Natural killer cell (primary cell): ENCODE measurements at regions of chr3 and their contacts with region 1.

Region 1: GRCh38 chr3:100254168-100254777 is 6.5 kb upstream of the TBC1D23 start:
- DNase-seq: peak in 1 of 2 donors; percentile 65
- ATAC-seq: peak; percentile 54 to 79 (median 70)
- H3K4me3 ChIP-seq: no peak overlapping the region
- H3K4me3 Mint-ChIP-seq: no peak overlapping the region
- H3K27ac ChIP-seq: no peak overlapping the region
- H3K27ac Mint-ChIP-seq: no peak overlapping the region
- H3K4me1 ChIP-seq: no peaks in the 10 kb centered on the region
- H3K4me1 Mint-ChIP-seq: no peaks in the 10 kb centered on the region
- H3K27me3 ChIP-seq: no peaks in the 10 kb centered on the region
- H3K27me3 Mint-ChIP-seq: no peaks in the 10 kb centered on the region
- CTCF ChIP-seq: peak; percentile 39

Region 2: GRCh38 chr3:99833617-99834205 is 420.6 kb before region 1 on chr3:
- intact Hi-C with region 1: loop called (anchors 2 kb)
- DNase-seq: no peak
- ATAC-seq: no peak
- H3K4me3 ChIP-seq: no peak overlapping the region
- H3K4me3 Mint-ChIP-seq: no peak overlapping the region
- H3K27ac ChIP-seq: no peak overlapping the region
- H3K27ac Mint-ChIP-seq: no peak overlapping the region
- H3K4me1 ChIP-seq: no peaks in the 10 kb centered on the region
- H3K4me1 Mint-ChIP-seq: no peaks in the 10 kb centered on the region
- H3K27me3 ChIP-seq: no peaks in the 10 kb centered on the region
- H3K27me3 Mint-ChIP-seq: no peaks in the 10 kb centered on the region
- CTCF ChIP-seq: no peak

Region 3: DNA sequence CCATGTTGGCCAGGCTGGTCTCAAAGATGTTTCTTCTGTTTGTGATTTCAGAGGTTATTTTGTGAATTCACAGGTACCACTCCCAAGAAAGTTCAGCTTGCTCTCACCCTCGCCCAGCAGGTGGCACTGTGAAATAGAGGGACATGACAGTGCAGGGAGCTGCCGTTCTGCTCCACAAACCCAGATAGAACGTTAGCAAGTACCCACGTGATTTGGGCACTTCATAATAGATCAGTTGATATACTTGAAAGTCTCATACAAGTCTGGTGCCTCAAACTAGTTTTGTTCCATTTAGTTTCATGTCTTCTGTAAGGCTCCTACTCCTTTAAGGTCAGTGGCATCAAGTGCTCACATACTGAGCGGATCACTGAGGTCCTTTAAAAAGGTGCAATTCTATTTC is 185.4 kb before region 1 on chr3:
- intact Hi-C with region 1: loop called (anchors 1 kb)
- DNase-seq: peak; percentile 61 to 84
- ATAC-seq: peak; percentile 87 to 92 (median 88)
- H3K4me3 ChIP-seq: no peak overlapping the region
- H3K4me3 Mint-ChIP-seq: no peak overlapping the region
- H3K27ac ChIP-seq: no peak overlapping the region
- H3K27ac Mint-ChIP-seq: peak overlapping the region in 1 of 2 donors; percentile 58
- H3K4me1 ChIP-seq: peaks cover 19% of the 10 kb centered on the region
- H3K4me1 Mint-ChIP-seq: peaks cover 35 to 40% of the 10 kb centered on the region in 2 donors
- H3K27me3 ChIP-seq: no peaks in the 10 kb centered on the region
- H3K27me3 Mint-ChIP-seq: no peaks in the 10 kb centered on the region
- CTCF ChIP-seq: peak; percentile 82

Region 4: GRCh38 chr3:100125161-100125938 is 128.9 kb before region 1 on chr3:
- intact Hi-C with region 1: no loop called
- DNase-seq: no peak
- ATAC-seq: no peak
- H3K4me3 ChIP-seq: no peak overlapping the region
- H3K4me3 Mint-ChIP-seq: no peak overlapping the region
- H3K27ac ChIP-seq: no peak overlapping the region
- H3K27ac Mint-ChIP-seq: no peak overlapping the region
- H3K4me1 ChIP-seq: no peaks in the 10 kb centered on the region
- H3K4me1 Mint-ChIP-seq: no peaks in the 10 kb centered on the region
- H3K27me3 ChIP-seq: no peaks in the 10 kb centered on the region
- H3K27me3 Mint-ChIP-seq: no peaks in the 10 kb centered on the region
- CTCF ChIP-seq: no peak

Region 5: DNA sequence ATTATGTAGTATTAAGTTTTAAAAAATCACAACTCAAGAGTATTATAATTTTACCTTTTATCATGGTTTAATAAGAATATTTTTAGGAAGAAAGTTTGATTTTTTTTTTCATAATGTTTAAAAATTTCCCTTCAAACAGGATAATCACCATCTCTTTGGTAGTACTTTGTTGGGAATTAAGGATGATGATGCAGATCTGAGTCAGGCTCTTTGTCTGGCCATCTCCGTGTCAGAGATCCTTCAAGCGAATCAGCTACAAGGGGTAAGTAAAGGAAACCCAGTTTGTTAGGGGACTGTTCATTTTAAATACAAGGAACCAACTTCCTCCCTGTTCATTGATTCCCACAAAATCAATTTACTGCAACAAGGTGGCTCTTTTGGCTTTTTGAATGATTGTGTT is 43.5 kb after region 1 on chr3:
- intact Hi-C with region 1: no loop called
- DNase-seq: no peak
- ATAC-seq: no peak
- H3K4me3 ChIP-seq: no peak overlapping the region
- H3K4me3 Mint-ChIP-seq: no peak overlapping the region
- H3K27ac ChIP-seq: no peak overlapping the region
- H3K27ac Mint-ChIP-seq: no peak overlapping the region
- H3K4me1 ChIP-seq: no peaks in the 10 kb centered on the region
- H3K4me1 Mint-ChIP-seq: no peaks in the 10 kb centered on the region
- H3K27me3 ChIP-seq: no peaks in the 10 kb centered on the region
- H3K27me3 Mint-ChIP-seq: no peaks in the 10 kb centered on the region
- CTCF ChIP-seq: no peak

Region 6: DNA sequence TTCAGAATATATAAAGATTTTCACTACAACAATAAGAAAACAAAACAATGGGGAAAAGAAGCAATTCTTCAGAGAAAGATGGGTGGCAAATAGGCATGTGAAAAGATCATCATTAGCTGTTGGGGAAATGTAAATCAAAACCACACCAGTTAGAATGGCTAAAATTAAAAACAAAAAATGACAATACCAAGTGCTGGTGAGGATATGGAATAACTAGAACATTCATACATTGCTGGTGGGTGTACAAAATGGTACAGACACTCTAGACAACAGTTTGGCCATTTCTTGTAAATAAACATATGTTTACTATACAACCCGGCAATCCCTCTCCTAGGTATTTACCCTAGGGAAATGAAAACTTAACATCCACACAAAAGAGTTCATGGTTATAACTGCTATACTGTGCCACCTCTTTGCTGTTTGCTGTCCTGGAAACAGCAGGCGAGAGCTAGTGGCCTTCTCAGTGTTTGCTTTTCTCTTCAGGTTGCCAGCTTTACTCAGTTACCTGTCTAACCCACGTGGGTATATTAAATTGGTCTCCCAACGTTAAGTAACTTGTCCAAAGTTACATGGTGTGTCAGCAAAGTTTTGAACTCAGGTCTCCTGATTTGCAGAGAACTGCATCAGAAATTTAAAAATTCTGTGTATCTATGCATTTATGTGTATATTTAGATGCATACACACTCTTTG is 75.7 kb after region 1 on chr3:
- intact Hi-C with region 1: no loop called
- DNase-seq: no peak
- ATAC-seq: no peak
- H3K4me3 ChIP-seq: no peak overlapping the region
- H3K4me3 Mint-ChIP-seq: no peak overlapping the region
- H3K27ac ChIP-seq: no peak overlapping the region
- H3K27ac Mint-ChIP-seq: no peak overlapping the region
- H3K4me1 ChIP-seq: peaks cover 10% of the 10 kb centered on the region
- H3K4me1 Mint-ChIP-seq: peaks cover under 1 to 7% of the 10 kb centered on the region in 2 donors
- H3K27me3 ChIP-seq: no peaks in the 10 kb centered on the region
- H3K27me3 Mint-ChIP-seq: no peaks in the 10 kb centered on the region
- CTCF ChIP-seq: no peak

Region 7: DNA sequence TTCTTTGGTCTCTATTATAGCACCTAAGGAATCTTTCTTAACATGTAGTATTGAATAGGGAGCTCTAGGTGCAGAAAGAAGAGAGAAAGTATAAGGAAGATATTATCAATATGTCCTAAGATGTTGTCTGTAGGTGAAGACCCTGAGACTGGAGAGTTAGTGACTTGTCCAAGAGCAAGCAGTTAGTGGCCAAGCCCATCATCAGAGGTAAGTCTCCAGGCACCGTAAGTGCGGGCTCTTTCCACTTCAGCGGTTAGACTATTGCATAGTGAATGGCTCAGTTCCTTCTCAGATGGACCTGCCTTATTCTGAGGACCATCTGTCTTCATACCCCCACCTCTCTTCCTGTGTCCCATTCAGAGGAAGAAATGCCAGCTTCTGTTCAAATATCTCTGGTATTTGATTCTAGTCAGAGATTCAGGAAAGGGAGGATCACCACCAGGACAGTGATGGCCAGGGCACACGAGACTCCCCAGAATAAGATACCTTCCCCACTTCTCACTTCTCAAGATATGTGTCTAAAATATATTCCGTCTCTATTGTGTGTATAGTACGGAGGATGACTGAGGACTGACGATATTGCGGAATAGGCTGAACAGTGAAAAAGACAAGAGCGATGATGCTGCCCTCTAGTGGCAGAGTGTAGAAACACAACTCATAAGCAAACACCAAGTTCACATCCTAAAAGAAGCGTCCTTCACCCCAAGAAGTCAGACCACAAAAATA is 336.0 kb after region 1 on chr3:
- intact Hi-C with region 1: no loop called
- DNase-seq: peak in 1 of 2 donors; percentile 86
- ATAC-seq: peak; percentile 90 to 96 (median 91)
- H3K4me3 ChIP-seq: no peak overlapping the region
- H3K4me3 Mint-ChIP-seq: no peak overlapping the region
- H3K27ac ChIP-seq: no peak overlapping the region
- H3K27ac Mint-ChIP-seq: no peak overlapping the region
- H3K4me1 ChIP-seq: peaks cover 3% of the 10 kb centered on the region
- H3K4me1 Mint-ChIP-seq: no peaks in the 10 kb centered on the region
- H3K27me3 ChIP-seq: no peaks in the 10 kb centered on the region
- H3K27me3 Mint-ChIP-seq: no peaks in the 10 kb centered on the region
- CTCF ChIP-seq: peak; percentile 92